ENCODE measurements at regions of chr3 and their contacts with region 1.

Region 1: DNA sequence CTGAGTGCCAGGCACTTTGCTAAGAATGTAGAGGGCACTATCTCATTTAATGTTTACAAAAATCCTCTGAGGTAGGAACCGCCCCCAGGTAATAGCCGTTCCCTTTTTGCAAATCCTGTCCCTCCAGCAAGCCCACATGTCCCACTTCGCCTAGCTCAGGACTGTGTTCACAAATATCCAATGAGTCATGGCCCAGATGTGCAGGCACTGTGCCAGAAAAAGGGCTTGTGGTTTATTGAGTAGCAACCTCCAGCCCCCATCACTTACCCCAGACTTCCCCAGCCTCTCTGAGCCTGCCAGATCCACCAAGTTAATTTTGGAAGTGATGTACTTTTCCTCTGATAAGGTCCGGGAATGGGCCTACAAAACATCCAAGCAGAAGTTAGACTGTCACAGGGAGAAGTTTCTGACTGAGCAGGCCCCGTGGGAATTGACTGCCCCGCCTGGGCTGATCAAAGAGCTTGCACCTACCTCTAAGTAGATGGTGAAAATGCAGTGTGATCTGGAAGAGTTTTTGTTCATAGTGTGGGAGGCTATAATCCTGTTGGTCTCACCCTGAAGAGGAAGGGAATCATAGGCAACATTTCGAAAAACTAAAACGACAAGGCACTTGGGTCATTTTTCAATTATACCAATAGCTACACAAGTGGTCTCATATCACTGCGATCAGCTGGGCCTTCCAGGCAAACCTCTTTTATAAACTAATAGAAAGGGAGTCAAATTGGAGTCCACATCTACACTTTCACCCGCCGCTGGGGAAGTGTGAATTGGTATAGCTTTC is 15.7 kb downstream of the KIF9 start:
- DNase-seq: peak; percentile 93 to 99 (median 98)
- H3K4me3 ChIP-seq: no peak overlapping the region
- H3K27ac ChIP-seq: peak overlapping the region in 1 of 2 experiments; percentile 35
- H3K4me1 ChIP-seq: peaks cover 0 to 32% (median 19%) of the 10 kb centered on the region in 4 experiments
- H3K27me3 ChIP-seq: no peaks in the 10 kb centered on the region

Region 2: GRCh38 chr3:47250309-47251060 is 16.4 kb before region 1 on chr3:
- CTCF ChIA-PET with region 1: interaction called, 19 read pairs
- POLR2A ChIA-PET with region 1: no interaction called
- DNase-seq: peak; percentile 19 to 59 (median 58)
- H3K4me3 ChIP-seq: no peak overlapping the region
- H3K27ac ChIP-seq: no peak overlapping the region
- H3K4me1 ChIP-seq: peaks cover 0 to 5% (median 0%) of the 10 kb centered on the region in 4 experiments
- H3K27me3 ChIP-seq: no peaks in the 10 kb centered on the region